ENCODE measurements at regions of chr2 and their contacts with region 1.

Region 1: GRCh38 chr2:64750817-64751285 is 97.1 kb upstream of the SERTAD2 start:
- DNase-seq: peak; percentile 99
- H3K4me3 Mint-ChIP-seq: peak overlapping the region; percentile 99
- H3K27ac Mint-ChIP-seq: peak overlapping the region; percentile 89
- H3K4me1 Mint-ChIP-seq: peaks cover 30% of the 10 kb centered on the region
- H3K27me3 Mint-ChIP-seq: no peaks in the 10 kb centered on the region

Region 2: GRCh38 chr2:64036034-64036705 is 714.7 kb before region 1 on chr2:
- CTCF ChIA-PET with region 1: no interaction called
- intact Hi-C with region 1: loop called (anchors 5 kb)
- DNase-seq: peak; percentile 37
- H3K4me3 Mint-ChIP-seq: peak overlapping the region; percentile 25
- H3K27ac Mint-ChIP-seq: peak overlapping the region; percentile 70
- H3K4me1 Mint-ChIP-seq: peaks cover 50% of the 10 kb centered on the region
- H3K27me3 Mint-ChIP-seq: no peaks in the 10 kb centered on the region

Region 3: GRCh38 chr2:64632835-64633819 is 117.7 kb before region 1 on chr2:
- CTCF ChIA-PET with region 1: no interaction called
- intact Hi-C with region 1: no loop called
- DNase-seq: no peak
- H3K4me3 Mint-ChIP-seq: no peak overlapping the region
- H3K27ac Mint-ChIP-seq: no peak overlapping the region
- H3K4me1 Mint-ChIP-seq: peaks cover 25% of the 10 kb centered on the region
- H3K27me3 Mint-ChIP-seq: no peaks in the 10 kb centered on the region

Region 4: GRCh38 chr2:64644177-64645004 is 106.5 kb before region 1 on chr2:
- CTCF ChIA-PET with region 1: interaction called, 32 read pairs
- intact Hi-C with region 1: loop called (anchors 1 kb)
- DNase-seq: peak; percentile 78
- H3K4me3 Mint-ChIP-seq: peak overlapping the region; percentile 87
- H3K27ac Mint-ChIP-seq: peak overlapping the region; percentile 87
- H3K4me1 Mint-ChIP-seq: peaks cover 80% of the 10 kb centered on the region
- H3K27me3 Mint-ChIP-seq: no peaks in the 10 kb centered on the region

Region 5: GRCh38 chr2:64698668-64699444 is 52.0 kb before region 1 on chr2:
- CTCF ChIA-PET with region 1: interaction called, 3 read pairs
- intact Hi-C with region 1: loop called (anchors 1 kb)
- DNase-seq: no peak
- H3K4me3 Mint-ChIP-seq: peak overlapping the region; percentile 8
- H3K27ac Mint-ChIP-seq: peak overlapping the region; percentile 68
- H3K4me1 Mint-ChIP-seq: peaks cover 47% of the 10 kb centered on the region
- H3K27me3 Mint-ChIP-seq: no peaks in the 10 kb centered on the region

Region 6: GRCh38 chr2:64792307-64792706 is 41.5 kb after region 1 on chr2:
- CTCF ChIA-PET with region 1: no interaction called
- intact Hi-C with region 1: no loop called
- DNase-seq: no peak
- H3K4me3 Mint-ChIP-seq: no peak overlapping the region
- H3K27ac Mint-ChIP-seq: no peak overlapping the region
- H3K4me1 Mint-ChIP-seq: no peaks in the 10 kb centered on the region
- H3K27me3 Mint-ChIP-seq: no peaks in the 10 kb centered on the region

Region 7: GRCh38 chr2:64819774-64820696 is 69.2 kb after region 1 on chr2:
- CTCF ChIA-PET with region 1: no interaction called
- intact Hi-C with region 1: loop called (anchors 2 kb)
- DNase-seq: peak; percentile 72
- H3K4me3 Mint-ChIP-seq: peak overlapping the region; percentile 39
- H3K27ac Mint-ChIP-seq: peak overlapping the region; percentile 85
- H3K4me1 Mint-ChIP-seq: peaks cover 19% of the 10 kb centered on the region
- H3K27me3 Mint-ChIP-seq: no peaks in the 10 kb centered on the region

Region 8: DNA sequence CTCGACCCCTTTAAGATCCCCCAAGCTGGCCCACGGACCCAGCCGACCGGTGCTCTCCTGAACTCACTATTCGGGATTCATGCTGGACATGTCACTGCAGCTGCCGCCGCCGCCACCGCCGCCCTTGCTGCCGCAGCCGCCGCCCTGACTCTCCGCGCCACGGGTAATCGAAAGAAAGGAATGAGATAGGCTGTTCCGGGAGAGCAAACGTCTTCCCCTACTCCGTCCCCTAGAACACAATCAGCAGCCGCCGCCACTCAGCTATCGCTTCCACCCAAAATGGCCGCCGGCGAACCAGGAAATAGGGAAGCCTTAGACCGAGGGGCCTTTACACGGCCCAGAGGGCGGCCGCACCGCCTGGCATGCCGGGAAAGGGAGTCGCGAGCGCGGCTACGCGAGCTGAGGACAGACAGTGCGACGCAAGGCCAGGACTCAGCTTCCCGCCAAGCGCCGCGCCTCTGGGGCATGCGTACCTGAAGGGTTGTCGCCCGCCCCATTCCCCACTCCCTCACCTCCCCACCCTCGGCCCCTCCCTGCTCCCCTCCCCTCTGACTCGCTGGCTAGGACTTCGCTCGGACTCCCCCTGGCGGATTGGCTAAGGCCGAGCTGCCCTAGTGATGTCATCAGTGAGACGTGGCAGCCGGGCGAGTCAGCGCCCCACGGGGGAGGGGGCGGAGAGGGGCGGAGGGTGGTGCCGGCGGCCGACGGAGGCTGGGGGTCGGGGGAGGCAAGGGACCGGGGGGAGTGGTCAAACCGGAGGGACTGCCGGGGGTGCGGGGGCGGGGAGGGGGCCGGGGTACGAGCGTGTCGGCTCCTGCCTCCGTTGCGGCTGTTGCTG is 379.2 kb after region 1 on chr2 and contains the start of gene RAB1A:
- CTCF ChIA-PET with region 1: no interaction called
- intact Hi-C with region 1: loop called (anchors 1 kb)
- DNase-seq: peak; percentile 100
- H3K4me3 Mint-ChIP-seq: peak within 1 kb of the TSS; percentile 95
- H3K27ac Mint-ChIP-seq: peak within 1 kb of the TSS; percentile 94
- H3K4me1 Mint-ChIP-seq: peaks cover 35% of the 10 kb centered on the region
- H3K27me3 Mint-ChIP-seq: no peaks in the 10 kb centered on the region
- total RNA-seq, gene RAB1A: 60.8 to 61.3 TPM